Endothelial cell of umbilical vein (primary cell): ENCODE measurements at regions of chr12 and their contacts with region 1.

Region 1: DNA sequence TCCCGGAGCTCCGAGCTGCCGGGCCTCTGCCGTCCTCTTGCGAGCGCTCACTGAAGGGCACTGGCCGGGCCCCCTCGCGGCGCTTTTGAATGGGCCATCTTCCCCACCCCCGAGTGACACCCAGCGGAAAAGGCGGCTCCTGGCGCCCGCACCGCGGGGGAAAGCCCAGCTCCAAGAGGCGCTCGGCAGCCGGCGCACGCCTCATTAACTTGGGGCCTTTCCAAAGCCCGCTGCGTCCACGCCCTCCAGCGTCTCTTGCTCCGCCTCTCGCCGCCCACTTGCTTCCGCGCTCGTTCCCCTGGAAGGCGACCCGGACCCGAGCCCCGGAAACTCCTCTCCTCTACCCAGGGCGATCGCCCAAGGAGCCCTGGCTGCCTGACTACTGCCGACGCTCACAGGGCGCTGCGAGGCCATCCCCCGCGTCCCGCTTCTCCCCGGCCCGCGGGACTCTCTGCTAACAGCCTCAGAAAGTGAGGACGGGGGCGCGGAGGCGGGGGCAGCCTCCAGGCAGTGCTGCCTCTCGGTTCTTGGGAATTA is at the start of gene PHLDA1:
- DNase-seq: peak; percentile 96
- H3K4me3 ChIP-seq: peak within 1 kb of the TSS; percentile 77 to 99 (median 82)
- H3K27ac ChIP-seq: peak within 1 kb of the TSS; percentile 87
- H3K4me1 ChIP-seq: peaks cover 26% of the 10 kb centered on the region
- H3K27me3 ChIP-seq: no peaks in the 10 kb centered on the region
- CTCF ChIP-seq: peak; percentile 60 to 79
- POLR2A ChIP-seq: peak; percentile 98
- total RNA-seq, gene PHLDA1: 26.8 and 30.8 TPM in 2 replicates

Region 2: DNA sequence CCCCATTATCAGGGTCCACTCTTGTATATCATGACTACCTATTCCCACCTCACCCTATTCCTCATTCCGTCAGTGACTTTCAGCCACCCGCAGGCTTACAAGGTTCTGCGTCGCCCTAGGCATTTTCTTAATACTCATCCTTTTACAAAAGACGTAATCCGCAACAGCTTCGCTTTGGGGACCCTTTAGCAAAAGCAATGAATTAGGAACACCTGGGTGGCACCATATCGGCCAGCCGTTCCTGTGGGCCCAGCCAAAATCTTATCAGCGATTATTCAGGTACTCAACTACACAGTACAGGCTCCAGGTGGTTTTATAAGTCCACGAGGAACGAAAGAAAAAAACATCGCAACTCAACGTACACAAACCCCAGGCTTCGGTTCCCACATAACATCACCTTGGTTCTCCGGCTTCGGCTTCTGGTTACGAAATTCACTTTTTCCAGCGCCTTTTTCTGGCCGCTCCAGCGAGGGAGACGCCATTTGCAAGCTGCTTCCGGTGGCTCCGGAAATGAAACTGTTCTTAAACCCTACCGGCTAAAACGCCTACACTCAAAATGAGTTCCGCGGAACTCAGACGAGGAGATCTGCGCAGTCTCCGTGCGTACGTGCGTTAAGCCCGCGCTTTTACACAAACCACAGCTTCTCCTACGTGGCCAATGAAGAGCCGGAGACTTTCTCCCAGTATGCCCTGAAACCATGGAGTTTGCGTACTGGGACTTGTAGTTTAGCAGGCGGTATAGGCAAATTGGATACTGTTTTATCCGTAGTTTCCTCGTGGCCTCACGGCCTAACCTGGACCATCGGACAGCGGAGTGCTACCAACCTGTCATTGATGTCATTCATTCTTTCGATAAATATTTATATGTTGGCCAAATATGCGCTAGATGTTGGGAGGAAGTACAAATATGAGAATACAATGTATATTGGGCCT is 520.2 kb before region 1 on chr12 and contains the start of gene KRR1:
- CTCF ChIA-PET with region 1: interaction called, 7 read pairs
- POLR2A ChIA-PET with region 1: interaction called, 3 read pairs
- dilution Hi-C with region 1: loop called (anchors 25 kb)
- intact Hi-C with region 1: loop called (anchors 1 kb)
- DNase-seq: peak; percentile 99
- H3K4me3 ChIP-seq: peak within 1 kb of the TSS; percentile 91 to 98 (median 93)
- H3K27ac ChIP-seq: peak within 1 kb of the TSS; percentile 91
- H3K4me1 ChIP-seq: peaks cover 12% of the 10 kb centered on the region
- H3K27me3 ChIP-seq: no peaks in the 10 kb centered on the region
- CTCF ChIP-seq: no peak
- POLR2A ChIP-seq: peak; percentile 66
- total RNA-seq, gene KRR1: 49.3 and 53.4 TPM in 2 replicates

Region 3: GRCh38 chr12:75623631-75624118 is 407.9 kb before region 1 on chr12:
- CTCF ChIA-PET with region 1: interaction called, 3 read pairs
- POLR2A ChIA-PET with region 1: no interaction called
- dilution Hi-C with region 1: no loop called
- intact Hi-C with region 1: loop called (anchors 1 kb)
- DNase-seq: peak; percentile 53
- H3K4me3 ChIP-seq: no peak overlapping the region
- H3K27ac ChIP-seq: peak overlapping the region; percentile 43
- H3K4me1 ChIP-seq: peaks cover 9% of the 10 kb centered on the region
- H3K27me3 ChIP-seq: no peaks in the 10 kb centered on the region
- CTCF ChIP-seq: no peak
- POLR2A ChIP-seq: no peak

Region 4: DNA sequence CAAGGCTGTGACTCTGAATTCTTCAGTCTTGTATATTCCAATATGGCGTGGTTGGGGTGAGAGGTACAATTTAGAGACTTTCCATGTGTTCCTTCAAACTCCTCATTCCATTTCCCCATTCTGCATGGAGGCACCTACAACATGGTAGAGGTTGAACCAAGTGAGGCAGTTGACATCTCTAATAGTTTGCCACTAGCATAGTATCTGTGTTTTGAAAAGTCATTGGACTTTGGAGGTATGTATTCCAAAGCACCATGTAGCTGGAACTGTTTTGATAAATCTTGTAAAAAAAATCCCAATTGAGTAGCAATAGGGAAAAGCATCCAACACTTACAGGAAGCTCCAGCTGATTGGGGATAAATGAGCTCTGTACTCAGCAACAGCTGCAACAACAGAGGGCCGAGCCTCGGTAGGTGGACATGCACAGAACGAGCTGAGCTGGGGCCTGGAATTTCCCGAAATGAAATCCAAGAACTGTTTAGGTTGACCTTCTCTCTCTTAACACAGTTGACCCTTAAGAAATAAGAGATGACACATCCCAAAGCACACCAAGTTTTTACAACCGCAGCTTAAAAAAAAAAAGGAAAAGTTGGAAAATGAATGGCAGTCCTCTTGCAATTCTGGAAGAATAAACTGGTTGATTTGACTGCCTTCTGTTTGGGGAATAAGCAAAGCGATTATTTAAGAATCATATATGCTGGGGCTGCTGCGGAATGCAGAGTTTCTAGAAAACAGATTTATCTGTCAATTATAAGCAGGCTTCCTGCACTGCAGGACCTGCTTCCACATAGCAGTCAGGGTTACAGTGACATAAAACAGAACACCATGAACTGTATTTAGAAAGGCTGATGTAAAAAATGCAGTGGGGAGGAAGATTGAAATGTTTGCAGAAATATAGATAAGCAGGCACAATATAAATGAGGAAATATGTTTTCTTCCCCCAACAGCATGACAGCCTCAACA is 325.6 kb before region 1 on chr12:
- CTCF ChIA-PET with region 1: interaction called, 13 read pairs
- POLR2A ChIA-PET with region 1: interaction called, 18 read pairs
- dilution Hi-C with region 1: no loop called
- intact Hi-C with region 1: loop called (anchors 1 kb)
- DNase-seq: peak; percentile 98
- H3K4me3 ChIP-seq: peak overlapping the region in 1 of 3 experiments; percentile 37
- H3K27ac ChIP-seq: peak overlapping the region; percentile 84
- H3K4me1 ChIP-seq: peaks cover 44% of the 10 kb centered on the region
- H3K27me3 ChIP-seq: no peaks in the 10 kb centered on the region
- CTCF ChIP-seq: no peak
- POLR2A ChIP-seq: peak; percentile 49

Region 5: DNA sequence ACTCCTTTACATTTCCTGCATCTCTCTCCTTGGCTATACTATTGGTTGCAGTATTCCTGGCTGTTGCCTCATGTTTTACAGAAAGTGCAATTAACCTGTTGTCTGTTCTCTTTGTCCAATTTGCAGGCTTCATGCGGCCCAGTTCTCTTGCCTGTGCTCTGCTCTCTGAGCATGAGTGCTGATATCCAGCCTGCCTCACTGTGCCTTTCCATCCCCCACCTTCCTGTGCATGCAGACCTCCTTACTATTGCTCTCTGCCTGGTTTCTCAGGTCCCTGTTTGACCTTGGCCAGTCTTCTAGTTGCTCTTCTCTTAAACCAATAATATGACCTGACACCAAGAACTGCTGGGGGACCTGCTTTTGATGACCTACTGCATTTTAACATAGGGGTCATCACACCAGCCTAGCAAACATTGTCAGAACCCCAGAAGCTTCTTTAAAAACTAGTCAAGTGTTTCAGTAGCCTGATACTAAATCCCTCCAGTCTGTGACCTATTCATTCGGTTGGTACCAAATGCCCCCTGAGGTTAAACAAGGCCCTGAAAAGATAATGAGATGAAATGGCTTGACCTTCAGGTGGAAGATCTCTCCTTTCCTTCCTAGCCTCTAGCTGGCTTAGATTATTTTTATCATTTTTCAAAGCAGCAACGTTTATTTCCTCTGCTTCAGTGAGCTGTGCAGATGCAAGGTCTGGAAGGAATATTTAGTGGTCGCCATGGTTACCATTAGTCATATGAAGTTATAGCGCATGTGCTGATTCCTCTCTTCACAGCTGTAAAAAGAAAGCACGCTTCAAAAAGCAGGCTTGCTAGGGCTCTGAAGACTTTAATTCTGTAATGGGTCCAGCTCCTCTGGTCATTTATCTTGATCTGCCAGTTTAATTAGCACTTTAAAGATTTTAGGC is 216.5 kb before region 1 on chr12:
- CTCF ChIA-PET with region 1: interaction called, 4 read pairs
- POLR2A ChIA-PET with region 1: interaction called, 3 read pairs
- dilution Hi-C with region 1: no loop called
- intact Hi-C with region 1: loop called (anchors 1 kb)
- DNase-seq: peak; percentile 95
- H3K4me3 ChIP-seq: no peak overlapping the region
- H3K27ac ChIP-seq: peak overlapping the region; percentile 19
- H3K4me1 ChIP-seq: peaks cover 10% of the 10 kb centered on the region
- H3K27me3 ChIP-seq: no peaks in the 10 kb centered on the region
- CTCF ChIP-seq: no peak
- POLR2A ChIP-seq: no peak

Region 6: DNA sequence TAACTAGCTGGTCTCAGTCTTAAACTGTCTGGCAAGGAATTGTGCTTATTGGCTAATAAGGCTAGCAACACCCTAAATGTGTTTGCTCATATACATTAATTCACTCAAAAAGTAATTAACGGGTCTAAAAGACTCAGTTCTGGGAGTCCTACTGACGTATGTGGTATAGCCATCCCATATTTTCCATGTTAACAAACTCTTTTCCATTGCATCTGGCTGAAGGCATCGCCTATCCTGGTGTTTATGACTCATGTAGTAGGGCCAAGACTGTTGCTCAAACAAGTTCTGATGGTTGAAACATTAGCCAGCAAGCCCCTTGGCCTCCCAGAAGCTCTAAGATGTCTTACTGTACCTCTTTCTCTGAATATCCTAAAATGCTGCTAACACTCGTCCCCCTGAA is 98.5 kb before region 1 on chr12:
- CTCF ChIA-PET with region 1: interaction called, 9 read pairs
- POLR2A ChIA-PET with region 1: interaction called, 10 read pairs
- dilution Hi-C with region 1: no loop called
- intact Hi-C with region 1: loop called (anchors 1 kb)
- DNase-seq: peak; percentile 27
- H3K4me3 ChIP-seq: no peak overlapping the region
- H3K27ac ChIP-seq: no peak overlapping the region
- H3K4me1 ChIP-seq: peaks cover 20% of the 10 kb centered on the region
- H3K27me3 ChIP-seq: peaks cover 13% of the 10 kb centered on the region in 2 experiments
- CTCF ChIP-seq: no peak
- POLR2A ChIP-seq: no peak

Region 7: GRCh38 chr12:75977952-75978671 is 53.5 kb before region 1 on chr12:
- CTCF ChIA-PET with region 1: interaction called, 7 read pairs
- POLR2A ChIA-PET with region 1: interaction called, 20 read pairs
- dilution Hi-C with region 1: no loop called
- intact Hi-C with region 1: loop called (anchors 1 kb)
- DNase-seq: peak; percentile 100
- H3K4me3 ChIP-seq: no peak overlapping the region
- H3K27ac ChIP-seq: peak overlapping the region; percentile 96
- H3K4me1 ChIP-seq: peaks cover 44% of the 10 kb centered on the region
- H3K27me3 ChIP-seq: no peaks in the 10 kb centered on the region
- CTCF ChIP-seq: peak in 1 of 2 donors; percentile 11
- POLR2A ChIP-seq: no peak

Region 8: DNA sequence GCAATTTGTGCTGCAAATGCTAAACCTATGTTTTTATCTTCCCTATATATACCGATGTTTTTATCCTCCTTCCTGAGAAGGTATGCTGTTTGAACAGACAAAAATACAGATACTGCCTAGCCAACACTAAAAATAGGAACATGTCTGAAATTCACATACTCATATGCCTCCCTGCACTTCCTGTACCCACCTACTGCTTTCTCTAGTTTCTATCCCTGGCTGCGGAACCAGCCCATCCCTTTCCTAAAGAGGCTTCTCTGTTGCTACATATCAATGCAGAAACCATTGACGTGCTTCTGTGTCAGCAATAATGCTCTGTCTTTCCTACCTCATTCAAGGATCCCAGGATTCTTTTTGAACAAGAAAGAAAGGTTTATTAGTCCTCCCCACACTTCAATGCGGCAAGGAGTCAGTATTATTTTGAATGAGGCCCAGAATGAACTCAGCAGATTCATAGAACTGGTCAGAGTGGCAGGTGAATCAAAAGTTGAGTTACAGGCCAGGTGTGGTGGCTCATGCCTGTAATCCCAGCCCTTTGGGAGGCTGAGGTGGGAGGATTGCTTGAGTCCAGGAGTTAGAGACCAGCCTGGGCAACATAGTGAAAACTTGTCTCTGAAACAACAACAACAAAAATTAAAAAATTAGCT is 120.7 kb after region 1 on chr12:
- CTCF ChIA-PET with region 1: no interaction called
- POLR2A ChIA-PET with region 1: no interaction called
- dilution Hi-C with region 1: no loop called
- intact Hi-C with region 1: no loop called
- DNase-seq: no peak
- H3K4me3 ChIP-seq: no peak overlapping the region
- H3K27ac ChIP-seq: no peak overlapping the region
- H3K4me1 ChIP-seq: no peaks in the 10 kb centered on the region
- H3K27me3 ChIP-seq: no peaks in the 10 kb centered on the region
- CTCF ChIP-seq: no peak
- POLR2A ChIP-seq: no peak